HCT116 (cell line): ENCODE measurements at regions of chr7 and their contacts with region 1.

Region 1: DNA sequence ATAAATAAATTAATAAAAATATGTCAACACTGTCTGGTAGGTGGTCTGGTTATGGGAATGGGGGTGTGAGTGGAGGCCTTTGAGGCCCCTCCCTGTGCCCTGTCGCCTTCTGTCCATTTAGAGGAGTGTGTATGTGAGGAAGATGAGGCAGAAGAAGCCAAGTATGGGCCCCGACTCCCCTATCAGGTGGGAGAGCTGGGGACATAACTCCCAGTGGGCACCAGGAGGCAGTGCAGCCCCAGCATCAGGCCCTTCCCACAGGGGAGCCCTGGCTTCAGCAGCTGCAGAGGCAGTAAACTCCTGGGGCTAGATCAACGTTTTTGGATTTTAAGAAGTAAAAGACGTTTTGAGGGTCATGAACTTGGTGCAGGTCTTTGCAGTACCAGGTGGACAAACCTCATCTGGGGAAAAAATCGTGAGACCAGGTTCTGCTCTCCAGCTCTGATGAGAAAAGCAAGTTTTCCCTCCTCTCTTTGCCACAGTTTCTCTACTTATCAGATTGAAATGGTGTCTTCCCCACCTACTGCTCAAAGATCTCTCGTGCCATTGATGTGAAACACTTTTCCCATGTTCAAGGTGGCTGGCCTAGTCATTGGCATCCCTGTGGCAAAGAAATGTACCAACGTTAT is 167.8 kb upstream of the EEPD1 start:
- DNase-seq: peak; percentile 47
- ATAC-seq: peak; percentile 100
- H3K4me3 ChIP-seq: no peak overlapping the region
- H3K27ac ChIP-seq: no peak overlapping the region
- H3K4me1 ChIP-seq: no peaks in the 10 kb centered on the region
- H3K27me3 ChIP-seq: no peaks in the 10 kb centered on the region
- CTCF ChIP-seq: peak; percentile 92 to 96 (median 93)
- POLR2A ChIP-seq: no peak
- RAD21 ChIP-seq: peak; percentile 99

Region 2: GRCh38 chr7:36084475-36085097 is 99.3 kb after region 1 on chr7:
- CTCF ChIA-PET with region 1: no interaction called
- POLR2A ChIA-PET with region 1: no interaction called
- RAD21 ChIA-PET with region 1: no interaction called
- intact Hi-C with region 1: loop called (anchors 5 kb)
- DNase-seq: peak; percentile 52
- ATAC-seq: peak; percentile 98
- H3K4me3 ChIP-seq: no peak overlapping the region
- H3K27ac ChIP-seq: no peak overlapping the region
- H3K4me1 ChIP-seq: peaks cover 0 to 10% of the 10 kb centered on the region in 2 experiments; a peak in 2 of 4 replicates
- H3K27me3 ChIP-seq: no peaks in the 10 kb centered on the region
- CTCF ChIP-seq: peak; percentile 42 to 55 (median 53); a peak in 5 of 6 replicates
- POLR2A ChIP-seq: no peak
- RAD21 ChIP-seq: peak; percentile 74

Region 3: DNA sequence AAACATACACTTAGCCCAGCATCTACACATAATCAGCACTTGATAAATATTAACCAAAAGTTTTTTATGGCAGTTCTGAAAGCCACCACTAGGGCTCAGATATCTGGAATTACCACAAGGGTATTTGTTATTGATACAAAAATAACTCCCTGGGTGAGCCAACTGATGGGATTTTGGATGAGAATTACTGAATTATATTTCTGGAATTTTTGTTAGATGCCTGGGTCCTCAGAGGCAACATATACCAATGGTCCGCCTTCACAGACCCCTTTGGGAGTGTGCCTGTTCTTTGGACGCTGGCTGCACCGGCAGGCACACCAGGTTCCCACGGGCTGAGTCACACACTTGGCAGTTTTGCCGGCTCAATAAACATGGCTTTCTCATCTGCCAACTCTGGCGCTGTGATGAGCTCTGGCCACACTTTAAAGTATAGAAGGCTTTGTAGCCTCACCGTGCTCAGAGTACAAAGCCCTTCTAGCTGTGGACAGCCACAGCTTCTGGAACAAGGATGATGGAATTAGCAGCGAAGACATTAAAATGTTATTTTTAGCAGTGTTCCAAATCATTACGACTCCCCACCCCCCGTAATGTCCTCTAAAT is 143.3 kb after region 1 on chr7:
- CTCF ChIA-PET with region 1: no interaction called
- POLR2A ChIA-PET with region 1: no interaction called
- RAD21 ChIA-PET with region 1: no interaction called
- intact Hi-C with region 1: loop called (anchors 5 kb)
- DNase-seq: peak; percentile 60
- ATAC-seq: peak; percentile 94
- H3K4me3 ChIP-seq: peak overlapping the region; percentile 28 to 55
- H3K27ac ChIP-seq: peak overlapping the region; percentile 26
- H3K4me1 ChIP-seq: peaks cover 9 to 26% of the 10 kb centered on the region in 2 experiments; a peak in 3 of 4 replicates
- H3K27me3 ChIP-seq: no peaks in the 10 kb centered on the region
- CTCF ChIP-seq: peak; percentile 58 to 85 (median 66); a peak in 5 of 6 replicates
- POLR2A ChIP-seq: no peak
- RAD21 ChIP-seq: peak; percentile 46; the same call in 1 of the 2 replicates

Region 4: DNA sequence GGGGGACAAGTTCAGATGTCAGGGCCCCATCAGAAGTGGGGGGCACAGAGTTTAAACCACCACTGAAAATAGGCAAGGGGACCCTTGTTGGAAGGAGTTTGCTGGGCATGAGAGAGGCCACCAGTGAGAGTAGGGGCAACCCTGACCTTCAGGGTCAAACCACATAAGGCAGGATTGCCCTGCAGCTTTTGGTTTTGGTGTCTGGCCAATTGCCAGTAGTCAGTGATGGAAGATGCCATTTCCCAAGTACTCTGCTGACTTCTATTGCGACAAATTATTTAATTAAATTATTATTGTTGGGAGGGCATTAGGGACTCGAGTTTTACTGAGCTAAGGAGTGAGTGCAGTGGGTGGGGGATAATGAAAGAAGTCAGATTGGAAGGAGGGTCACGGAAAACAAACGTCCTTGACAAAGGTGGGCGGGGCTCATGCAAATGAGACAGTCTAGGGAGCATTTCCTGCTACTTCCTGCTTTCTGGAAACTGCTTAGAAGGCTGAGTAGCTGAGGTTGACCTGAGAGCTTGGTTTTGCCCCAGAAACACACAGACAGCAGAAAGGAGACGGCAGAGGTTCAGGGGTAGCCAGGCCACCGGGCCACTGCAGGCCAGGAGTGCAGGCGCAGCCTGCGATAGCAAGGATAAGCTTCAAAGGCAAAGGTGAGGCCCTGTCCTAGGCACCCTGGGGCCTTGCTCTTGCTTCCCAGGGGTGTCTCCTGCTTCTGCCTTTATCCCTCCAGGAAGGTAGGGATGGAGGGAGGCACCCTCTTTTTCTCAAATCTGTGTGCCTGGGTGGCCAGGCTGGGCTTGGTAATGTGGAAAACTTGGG is 330.3 kb after region 1 on chr7:
- CTCF ChIA-PET with region 1: interaction called, 64 read pairs
- POLR2A ChIA-PET with region 1: interaction called, 3 read pairs
- RAD21 ChIA-PET with region 1: interaction called, 9 to 13 read pairs
- intact Hi-C with region 1: loop called (anchors 1 kb)
- DNase-seq: no peak
- ATAC-seq: no peak; the same call in 1 of the 2 replicates
- H3K4me3 ChIP-seq: no peak overlapping the region
- H3K27ac ChIP-seq: no peak overlapping the region
- H3K4me1 ChIP-seq: peaks cover 2 to 8% of the 10 kb centered on the region in 2 experiments; a peak in 1 of 4 replicates
- H3K27me3 ChIP-seq: no peaks in the 10 kb centered on the region
- CTCF ChIP-seq: no peak
- POLR2A ChIP-seq: no peak
- RAD21 ChIP-seq: no peak